Activated CD8-positive, alpha-beta T cell treated with anti-CD3 and anti-CD28 coated beads for 36 hours (primary cell): ENCODE measurements at regions of chr1 and their contacts with region 1.

Region 1: GRCh38 chr1:91511386-91511785 is 10.7 kb downstream of the CDC7 start:
- DNase-seq: no peak
- ATAC-seq: no peak
- H3K4me3 Mint-ChIP-seq: no peak overlapping the region
- H3K27ac Mint-ChIP-seq: no peak overlapping the region
- H3K4me1 Mint-ChIP-seq: peaks cover 5% of the 10 kb centered on the region
- H3K27me3 Mint-ChIP-seq: no peaks in the 10 kb centered on the region
- CTCF ChIP-seq: peak; percentile 62

Region 2: GRCh38 chr1:91490501-91490900 is 20.9 kb before region 1 on chr1:
- CTCF ChIA-PET with region 1: no interaction called
- POLR2A ChIA-PET with region 1: no interaction called
- intact Hi-C with region 1: no loop called
- DNase-seq: no peak
- ATAC-seq: no peak
- H3K4me3 Mint-ChIP-seq: no peak overlapping the region
- H3K27ac Mint-ChIP-seq: no peak overlapping the region
- H3K4me1 Mint-ChIP-seq: peaks cover 6% of the 10 kb centered on the region
- H3K27me3 Mint-ChIP-seq: peaks cover 3% of the 10 kb centered on the region
- CTCF ChIP-seq: no peak

Region 3: GRCh38 chr1:91500756-91501522 is 10.4 kb before region 1 on chr1 and contains the start of gene CDC7:
- CTCF ChIA-PET with region 1: interaction called, 11 read pairs
- POLR2A ChIA-PET with region 1: interaction called, 4 read pairs
- intact Hi-C with region 1: no loop called
- DNase-seq: peak; percentile 92
- ATAC-seq: peak; percentile 89
- H3K4me3 Mint-ChIP-seq: no peak within 1 kb of the TSS
- H3K27ac Mint-ChIP-seq: no peak within 1 kb of the TSS
- H3K4me1 Mint-ChIP-seq: peaks cover 18% of the 10 kb centered on the region
- H3K27me3 Mint-ChIP-seq: no peaks in the 10 kb centered on the region
- CTCF ChIP-seq: peak; percentile 59
- total RNA-seq, gene CDC7: 28.0 to 30.3 TPM

Region 4: GRCh38 chr1:91523482-91523881 is 12.1 kb after region 1 on chr1:
- CTCF ChIA-PET with region 1: interaction called, 15 read pairs
- POLR2A ChIA-PET with region 1: interaction called, 5 read pairs
- intact Hi-C with region 1: no loop called
- DNase-seq: peak; percentile 76
- ATAC-seq: peak; percentile 95
- H3K4me3 Mint-ChIP-seq: no peak overlapping the region
- H3K27ac Mint-ChIP-seq: no peak overlapping the region
- H3K4me1 Mint-ChIP-seq: peaks cover 30% of the 10 kb centered on the region
- H3K27me3 Mint-ChIP-seq: no peaks in the 10 kb centered on the region
- CTCF ChIP-seq: no peak

Region 5: DNA sequence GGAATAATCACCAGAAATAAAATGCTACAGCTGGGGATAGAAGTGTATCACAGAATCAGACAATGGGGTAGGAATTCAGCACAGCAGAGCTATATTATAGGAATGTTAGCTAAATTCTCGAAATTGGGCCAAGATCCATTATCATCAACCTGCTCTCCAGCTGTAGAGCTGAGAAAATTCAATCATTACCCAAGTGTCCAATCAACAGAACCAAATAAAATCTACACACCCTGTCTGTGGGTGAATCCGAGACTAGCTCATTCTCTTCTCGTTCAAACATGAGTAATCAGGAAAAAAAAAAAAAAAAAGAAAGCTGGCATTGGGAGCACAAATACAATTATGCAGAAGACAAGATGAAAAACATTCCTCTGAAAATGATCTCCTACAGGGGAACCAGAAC is 108.5 kb after region 1 on chr1:
- CTCF ChIA-PET with region 1: interaction called, 12 read pairs
- POLR2A ChIA-PET with region 1: no interaction called
- intact Hi-C with region 1: no loop called
- DNase-seq: no peak
- ATAC-seq: no peak
- H3K4me3 Mint-ChIP-seq: no peak overlapping the region
- H3K27ac Mint-ChIP-seq: no peak overlapping the region
- H3K4me1 Mint-ChIP-seq: no peaks in the 10 kb centered on the region
- H3K27me3 Mint-ChIP-seq: peaks cover 5% of the 10 kb centered on the region
- CTCF ChIP-seq: no peak

Region 6: DNA sequence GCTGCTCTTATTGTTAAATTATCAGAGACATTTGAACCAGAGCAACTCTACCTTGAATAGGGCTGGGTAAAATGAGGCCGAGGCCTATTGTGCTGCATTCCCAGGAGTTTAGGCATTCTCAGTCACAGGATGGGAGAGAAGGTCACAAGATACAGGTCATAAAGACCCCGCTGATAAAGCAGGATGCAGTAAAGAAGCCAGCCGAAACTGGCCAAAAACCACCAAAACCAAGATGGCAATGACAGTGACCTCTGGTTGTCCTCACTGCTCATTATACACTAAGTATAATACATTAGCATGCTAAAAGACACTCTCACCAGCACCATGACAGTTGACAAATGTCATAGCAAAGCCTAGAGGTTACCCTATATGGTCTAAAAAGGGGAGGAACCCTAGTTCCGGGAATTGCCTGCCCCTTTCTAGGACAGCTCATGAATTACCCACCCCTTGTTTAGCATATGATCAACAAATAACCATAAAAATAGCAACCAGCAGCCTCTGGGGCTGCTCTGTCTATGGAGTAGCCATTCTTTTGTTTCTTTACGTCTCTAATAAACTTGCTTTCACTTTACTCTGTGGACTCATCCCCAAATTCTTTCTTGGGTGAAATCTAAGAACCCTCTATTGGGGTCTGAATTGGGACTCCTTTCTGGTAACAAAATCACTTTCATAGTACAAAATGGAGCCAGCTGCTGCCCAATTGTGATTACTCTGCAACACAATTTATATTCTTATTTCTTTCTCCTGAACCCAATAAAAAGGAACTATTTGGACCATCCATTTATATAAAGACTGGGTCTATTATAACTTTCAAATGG is 195.0 kb after region 1 on chr1:
- CTCF ChIA-PET with region 1: no interaction called
- POLR2A ChIA-PET with region 1: no interaction called
- intact Hi-C with region 1: no loop called
- DNase-seq: no peak
- ATAC-seq: no peak
- H3K4me3 Mint-ChIP-seq: no peak overlapping the region
- H3K27ac Mint-ChIP-seq: no peak overlapping the region
- H3K4me1 Mint-ChIP-seq: no peaks in the 10 kb centered on the region
- H3K27me3 Mint-ChIP-seq: no peaks in the 10 kb centered on the region
- CTCF ChIP-seq: no peak

Region 7: DNA sequence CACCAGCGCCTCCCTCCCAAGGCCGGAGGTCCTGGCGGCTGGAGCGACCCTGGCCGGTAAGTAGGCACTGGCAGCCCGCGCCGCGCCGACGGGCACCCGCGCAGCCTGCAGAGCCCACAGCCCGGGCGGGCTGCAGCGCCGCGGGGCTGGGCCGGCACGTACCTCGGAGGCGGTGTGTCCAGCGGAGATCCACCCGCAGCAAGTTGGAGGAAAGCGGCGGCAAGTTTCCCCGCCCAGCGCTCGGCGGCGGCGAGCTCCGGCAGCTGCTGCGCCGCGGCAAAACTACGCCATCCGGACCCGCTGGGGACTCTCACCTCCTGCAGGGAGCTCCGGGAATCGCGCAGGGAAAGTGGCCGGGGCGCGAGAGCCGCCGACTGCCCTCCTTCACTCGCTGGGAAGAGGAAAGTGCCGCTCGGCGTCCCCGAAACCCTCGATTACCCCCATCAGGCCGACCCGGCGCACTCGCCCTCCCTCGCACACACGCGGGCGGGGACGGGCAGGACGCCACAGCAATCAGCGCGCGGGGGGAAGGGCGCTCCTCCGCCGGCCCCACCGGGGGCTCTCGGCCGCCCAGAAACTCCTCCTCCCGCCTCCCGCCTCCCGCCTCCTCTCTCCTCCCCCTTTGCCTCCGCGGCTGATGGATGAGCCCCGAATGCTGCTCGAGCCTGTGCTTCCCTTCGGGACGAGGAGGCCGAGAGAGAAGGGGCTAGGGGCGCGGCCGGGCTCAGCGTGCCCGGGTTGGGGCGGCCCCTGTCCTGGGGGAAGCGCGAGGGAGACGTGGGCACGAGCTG is 374.5 kb after region 1 on chr1 and contains the start of gene TGFBR3:
- CTCF ChIA-PET with region 1: interaction called, 24 read pairs
- POLR2A ChIA-PET with region 1: no interaction called
- intact Hi-C with region 1: no loop called
- DNase-seq: peak; percentile 76
- ATAC-seq: peak; percentile 80
- H3K4me3 Mint-ChIP-seq: peak within 1 kb of the TSS; percentile 89
- H3K27ac Mint-ChIP-seq: peak within 1 kb of the TSS; percentile 74
- H3K4me1 Mint-ChIP-seq: peaks cover 45% of the 10 kb centered on the region
- H3K27me3 Mint-ChIP-seq: peaks cover 16% of the 10 kb centered on the region
- CTCF ChIP-seq: no peak
- total RNA-seq, gene TGFBR3: 5.5 to 7.5 TPM

Region 8: DNA sequence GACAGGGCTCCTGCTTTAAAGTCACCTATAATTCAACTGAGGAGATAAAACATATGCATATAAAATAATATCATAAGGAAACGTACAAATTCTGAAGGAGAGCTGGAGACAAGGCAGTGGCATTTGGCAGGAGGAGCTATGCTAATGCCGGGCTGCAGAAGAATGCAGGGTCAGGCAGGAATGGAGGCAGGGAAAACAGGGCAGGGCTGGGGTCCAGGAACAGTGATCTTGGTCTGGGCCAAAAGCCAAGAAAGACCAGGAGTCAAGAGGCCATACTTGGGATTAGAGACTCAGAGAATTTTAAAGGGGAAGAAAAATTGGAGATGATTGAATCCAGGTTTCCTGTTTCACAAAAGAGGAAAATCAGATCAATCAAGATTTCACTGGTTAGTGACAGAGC is 417.9 kb after region 1 on chr1:
- CTCF ChIA-PET with region 1: interaction called, 52 read pairs
- POLR2A ChIA-PET with region 1: interaction called, 3 read pairs
- intact Hi-C with region 1: loop called (anchors 2 kb)
- DNase-seq: no peak
- ATAC-seq: no peak
- H3K4me3 Mint-ChIP-seq: no peak overlapping the region
- H3K27ac Mint-ChIP-seq: no peak overlapping the region
- H3K4me1 Mint-ChIP-seq: peaks cover 1% of the 10 kb centered on the region
- H3K27me3 Mint-ChIP-seq: no peaks in the 10 kb centered on the region
- CTCF ChIP-seq: no peak